Tibial artery (tissue), 4 donors: ENCODE measurements at regions of chr5 and their contacts with region 1.

Region 1: DNA sequence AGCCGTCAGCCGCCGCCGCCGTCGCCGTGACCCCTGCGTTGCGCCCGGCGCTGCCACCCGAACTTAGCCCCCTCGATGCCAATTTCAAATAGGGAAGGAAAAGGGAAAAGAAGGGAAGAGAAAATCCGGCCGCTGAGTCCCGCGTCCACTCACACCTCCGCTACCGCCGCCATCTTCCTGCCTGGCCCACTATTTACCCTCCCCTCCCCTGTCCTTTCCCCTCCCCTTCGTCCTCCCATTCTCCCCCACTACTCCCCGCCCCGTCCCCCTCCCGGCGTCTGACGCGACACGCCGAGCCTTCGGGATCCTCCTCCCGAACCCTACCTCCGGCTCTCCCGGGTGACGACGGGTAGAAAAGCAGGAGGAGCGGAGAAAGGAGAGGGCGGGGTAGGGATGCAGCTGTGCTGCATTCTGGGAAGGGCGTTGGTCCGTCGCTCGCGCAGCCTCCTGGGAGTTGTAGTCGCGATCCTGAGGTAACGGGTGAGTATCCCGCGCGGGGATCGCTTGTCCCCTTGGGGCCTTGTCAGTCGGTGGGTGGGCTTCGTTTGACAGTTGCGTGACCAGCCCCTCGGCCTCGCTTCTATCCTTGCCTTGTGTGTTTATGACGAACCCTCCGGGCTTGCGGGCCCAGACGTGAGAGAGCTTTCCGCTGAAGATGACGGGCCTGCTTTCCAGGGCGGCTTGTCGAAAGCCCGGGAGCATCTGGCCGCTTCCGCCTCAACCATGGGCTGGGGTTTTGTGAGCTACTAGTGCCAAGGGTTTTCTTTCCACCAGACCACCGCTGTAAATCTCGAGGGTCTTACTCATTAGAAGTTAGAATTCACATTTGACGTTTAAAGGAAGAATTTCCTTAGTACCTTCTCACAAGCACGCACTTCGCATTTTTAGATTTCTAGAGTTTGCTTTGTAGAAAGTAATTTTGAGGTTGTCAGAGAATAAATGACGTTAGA is at the starts of genes CERT1 and POLK:
- DNase-seq: peak; percentile 98 to 99
- H3K4me3 ChIP-seq: peak within 1 kb of the TSS; percentile 81 to 92
- H3K27ac ChIP-seq: peak within 1 kb of the TSS; percentile 93 to 97
- H3K4me1 ChIP-seq: peaks cover 0 to 46% (median 16%) of the 10 kb centered on the region in 4 donors
- H3K27me3 ChIP-seq: no peaks in the 10 kb centered on the region
- CTCF ChIP-seq: no peak

Region 2: DNA sequence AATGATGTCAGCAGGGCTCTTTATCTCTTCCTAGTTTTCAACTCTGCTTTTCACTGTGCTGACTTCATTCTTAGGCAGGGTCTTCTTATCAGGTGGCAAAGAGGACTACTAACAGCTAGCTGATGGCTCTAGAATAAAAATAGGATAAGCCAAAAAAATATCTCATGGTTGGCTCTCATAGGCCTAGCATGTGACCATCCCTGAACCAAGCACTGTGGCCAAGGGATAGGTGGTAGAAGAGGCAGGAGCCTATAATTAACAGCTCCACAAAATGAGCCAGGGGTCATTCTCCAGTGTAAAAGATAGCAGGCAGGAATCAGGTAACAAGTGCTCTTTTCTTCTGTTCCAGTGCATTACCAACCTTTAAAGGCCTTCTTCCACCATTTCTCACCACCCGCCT is 120.6 kb after region 1 on chr5:
- intact Hi-C with region 1: no loop called
- DNase-seq: no peak
- H3K4me3 ChIP-seq: no peak overlapping the region
- H3K27ac ChIP-seq: no peak overlapping the region
- H3K4me1 ChIP-seq: no peaks in the 10 kb centered on the region
- H3K27me3 ChIP-seq: no peaks in the 10 kb centered on the region
- CTCF ChIP-seq: no peak

Region 3: DNA sequence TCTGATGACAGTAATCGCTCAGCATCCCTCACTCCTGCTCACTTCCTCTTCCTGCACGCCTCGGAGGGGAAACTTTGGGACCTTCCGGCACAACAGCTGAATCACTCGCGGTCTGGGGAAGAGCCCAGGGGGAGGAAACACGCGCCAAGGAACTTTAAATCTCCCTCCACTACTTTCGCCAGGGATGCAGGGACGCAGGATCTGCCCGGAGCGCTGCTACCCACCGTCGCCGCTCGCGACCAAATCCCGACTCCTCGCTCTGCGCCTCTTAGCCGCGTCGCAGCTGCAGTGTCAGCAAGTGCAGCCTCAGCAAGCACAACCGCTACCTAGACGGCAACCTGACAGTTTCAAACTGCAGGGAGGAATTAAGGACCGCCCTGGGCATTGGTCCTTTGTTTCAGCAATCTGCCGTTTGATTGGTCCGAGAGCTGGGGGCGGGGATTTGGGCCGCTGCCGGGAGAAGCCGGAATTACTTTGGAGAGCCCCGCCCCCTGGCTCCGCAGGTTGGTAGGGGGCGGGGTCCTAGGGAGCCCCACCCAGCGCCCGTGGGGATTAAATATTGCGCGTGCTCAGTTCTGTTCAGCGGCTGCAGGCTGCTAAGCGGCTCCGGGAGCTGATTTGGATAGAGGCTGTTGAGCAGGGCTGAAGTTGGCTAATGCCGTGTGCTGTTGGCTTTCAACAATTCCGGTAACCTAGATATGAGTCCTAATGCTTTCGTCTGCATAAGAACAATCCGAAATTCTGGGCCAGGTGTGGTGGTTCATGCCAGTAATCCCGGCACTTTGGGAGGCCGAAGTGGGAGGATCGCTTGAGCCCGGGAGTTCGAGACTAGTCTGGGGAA is 205.6 kb after region 1 on chr5 and contains the start of gene POC5:
- intact Hi-C with region 1: loop called (anchors 2 kb)
- DNase-seq: peak; percentile 95 to 99
- H3K4me3 ChIP-seq: peak within 1 kb of the TSS; percentile 73 to 75
- H3K27ac ChIP-seq: peak within 1 kb of the TSS; percentile 79 to 83
- H3K4me1 ChIP-seq: peaks cover 0 to 12% (median 12%) of the 10 kb centered on the region in 4 donors
- H3K27me3 ChIP-seq: no peaks in the 10 kb centered on the region
- CTCF ChIP-seq: no peak

Region 4: DNA sequence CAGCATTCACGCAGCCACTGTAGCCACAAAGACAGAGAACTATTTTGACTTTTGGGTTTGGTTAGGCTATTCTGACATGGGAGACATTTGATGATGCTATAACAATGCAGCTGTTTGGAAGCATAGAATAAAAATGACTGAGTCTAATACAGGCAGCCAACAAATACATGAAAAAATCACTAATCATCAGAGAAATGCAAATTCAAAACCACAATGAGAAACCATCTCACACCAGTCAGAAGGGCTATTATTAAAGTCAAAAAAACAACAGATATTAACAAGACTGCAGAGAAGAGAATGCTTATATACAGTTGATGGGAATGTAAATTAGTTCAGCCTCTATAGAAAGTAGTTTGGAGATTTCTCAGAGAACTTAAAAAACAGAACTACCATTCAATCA is 312.6 kb after region 1 on chr5:
- intact Hi-C with region 1: no loop called
- DNase-seq: no peak
- H3K4me3 ChIP-seq: no peak overlapping the region
- H3K27ac ChIP-seq: no peak overlapping the region
- H3K4me1 ChIP-seq: no peaks in the 10 kb centered on the region
- H3K27me3 ChIP-seq: no peaks in the 10 kb centered on the region
- CTCF ChIP-seq: no peak